IMR-90 (cell line): ENCODE measurements at regions of chr2 and their contacts with region 1.

Region 1: DNA sequence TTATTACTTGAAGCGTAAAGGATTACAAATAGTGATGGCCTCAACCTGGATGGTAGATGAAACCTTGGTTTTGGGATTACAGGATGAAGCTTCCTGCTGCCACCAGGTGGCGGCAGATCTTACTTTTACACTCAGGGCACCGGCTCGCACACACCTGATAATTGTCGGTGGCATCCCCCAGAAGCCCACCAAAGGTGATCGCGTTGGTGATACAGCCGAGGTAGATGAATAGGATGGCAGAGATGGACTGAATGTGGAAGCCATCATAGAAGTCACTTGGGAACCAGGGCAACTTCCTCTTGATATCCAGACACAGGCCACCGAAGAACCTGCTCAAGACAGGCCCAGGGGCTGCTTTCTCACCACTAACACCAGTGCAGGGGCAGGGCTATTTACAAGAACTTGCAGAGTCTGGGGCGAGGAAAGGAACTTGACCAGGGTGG is 51.8 kb downstream of the MTHFD2 start:
- DNase-seq: peak; percentile 40
- ATAC-seq: peak; percentile 62; the same call in 1 of the 2 replicates
- H3K4me3 ChIP-seq: no peak overlapping the region
- H3K27ac ChIP-seq: no peak overlapping the region
- H3K4me1 ChIP-seq: no peaks in the 10 kb centered on the region
- H3K27me3 ChIP-seq: peaks cover 34% of the 10 kb centered on the region
- CTCF ChIP-seq: peak; percentile 70
- POLR2A ChIP-seq: no peak
- RAD21 ChIP-seq: peak; percentile 64

Region 2: GRCh38 chr2:74178201-74179062 is 71.8 kb before region 1 on chr2 and contains the start of gene MOB1A:
- CTCF ChIA-PET with region 1: no interaction called
- POLR2A ChIA-PET with region 1: no interaction called
- dilution Hi-C with region 1: no loop called
- in situ Hi-C with region 1: no loop called
- intact Hi-C with region 1: no loop called
- DNase-seq: peak; percentile 98
- ATAC-seq: peak; percentile 99
- H3K4me3 ChIP-seq: peak within 1 kb of the TSS; percentile 95
- H3K27ac ChIP-seq: peak within 1 kb of the TSS; percentile 74
- H3K4me1 ChIP-seq: 0 out of 2 replicates have a peak, but pooled peaks cover 2% of the 10 kb centered on the region
- H3K27me3 ChIP-seq: no peaks in the 10 kb centered on the region
- CTCF ChIP-seq: no peak
- POLR2A ChIP-seq: peak; percentile 91
- RAD21 ChIP-seq: no peak
- total RNA-seq, gene MOB1A: 60.8 and 105 TPM in 2 replicates

Region 3: GRCh38 chr2:74212702-74213410 is 37.4 kb before region 1 on chr2:
- CTCF ChIA-PET with region 1: no interaction called
- POLR2A ChIA-PET with region 1: no interaction called
- dilution Hi-C with region 1: no loop called
- in situ Hi-C with region 1: no loop called
- intact Hi-C with region 1: no loop called
- DNase-seq: no peak
- ATAC-seq: no peak
- H3K4me3 ChIP-seq: no peak overlapping the region
- H3K27ac ChIP-seq: no peak overlapping the region
- H3K4me1 ChIP-seq: no peaks in the 10 kb centered on the region
- H3K27me3 ChIP-seq: no peaks in the 10 kb centered on the region
- CTCF ChIP-seq: no peak
- POLR2A ChIP-seq: no peak
- RAD21 ChIP-seq: no peak

Region 4: DNA sequence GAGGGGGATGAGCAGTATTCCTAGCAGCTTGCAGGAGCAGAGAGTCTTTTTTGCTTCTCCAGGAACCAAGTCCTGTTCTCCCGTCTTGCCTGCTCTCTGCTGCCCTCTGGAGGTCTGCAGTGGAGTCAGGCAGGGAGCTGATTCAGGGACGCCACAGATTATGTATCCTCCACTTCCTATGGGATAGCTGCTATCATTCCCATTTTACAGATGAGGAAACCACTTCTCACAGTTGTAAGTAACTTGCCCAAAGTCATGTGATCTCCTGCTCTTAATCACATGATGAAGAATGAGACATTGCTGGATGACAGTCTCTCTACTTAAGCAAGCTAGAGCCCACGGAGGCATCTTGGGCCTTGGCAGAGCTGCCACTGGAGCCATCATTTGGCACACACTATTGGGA is 84.7 kb after region 1 on chr2:
- CTCF ChIA-PET with region 1: interaction called, 11 read pairs
- POLR2A ChIA-PET with region 1: no interaction called
- dilution Hi-C with region 1: no loop called
- in situ Hi-C with region 1: loop called (anchors 5 kb)
- intact Hi-C with region 1: loop called (anchors 1 kb)
- DNase-seq: peak; percentile 72
- ATAC-seq: peak; percentile 97
- H3K4me3 ChIP-seq: no peak overlapping the region
- H3K27ac ChIP-seq: no peak overlapping the region
- H3K4me1 ChIP-seq: no peaks in the 10 kb centered on the region
- H3K27me3 ChIP-seq: peaks cover 12% of the 10 kb centered on the region
- CTCF ChIP-seq: peak; percentile 86
- POLR2A ChIP-seq: no peak
- RAD21 ChIP-seq: peak; percentile 74

Region 5: GRCh38 chr2:74399785-74400184 is 149.6 kb after region 1 on chr2:
- CTCF ChIA-PET with region 1: no interaction called
- POLR2A ChIA-PET with region 1: no interaction called
- dilution Hi-C with region 1: no loop called
- in situ Hi-C with region 1: no loop called
- intact Hi-C with region 1: loop called (anchors 1 kb)
- DNase-seq: peak; percentile 40
- ATAC-seq: peak; percentile 86
- H3K4me3 ChIP-seq: no peak overlapping the region
- H3K27ac ChIP-seq: no peak overlapping the region
- H3K4me1 ChIP-seq: no peaks in the 10 kb centered on the region
- H3K27me3 ChIP-seq: peaks cover 4% of the 10 kb centered on the region
- CTCF ChIP-seq: peak; percentile 53
- POLR2A ChIP-seq: no peak
- RAD21 ChIP-seq: peak; percentile 51

Region 6: GRCh38 chr2:74576863-74577229 is 326.6 kb after region 1 on chr2:
- CTCF ChIA-PET with region 1: no interaction called
- POLR2A ChIA-PET with region 1: no interaction called
- dilution Hi-C with region 1: no loop called
- in situ Hi-C with region 1: no loop called
- intact Hi-C with region 1: loop called (anchors 5 kb)
- DNase-seq: peak; percentile 90
- ATAC-seq: peak; percentile 47
- H3K4me3 ChIP-seq: no peak overlapping the region
- H3K27ac ChIP-seq: peak overlapping the region; percentile 84
- H3K4me1 ChIP-seq: peaks cover 21% of the 10 kb centered on the region
- H3K27me3 ChIP-seq: no peaks in the 10 kb centered on the region
- CTCF ChIP-seq: peak; percentile 36
- POLR2A ChIP-seq: no peak
- RAD21 ChIP-seq: peak; percentile 30